ENCODE measurements at regions of chr13 and their contacts with region 1.

Region 1: DNA sequence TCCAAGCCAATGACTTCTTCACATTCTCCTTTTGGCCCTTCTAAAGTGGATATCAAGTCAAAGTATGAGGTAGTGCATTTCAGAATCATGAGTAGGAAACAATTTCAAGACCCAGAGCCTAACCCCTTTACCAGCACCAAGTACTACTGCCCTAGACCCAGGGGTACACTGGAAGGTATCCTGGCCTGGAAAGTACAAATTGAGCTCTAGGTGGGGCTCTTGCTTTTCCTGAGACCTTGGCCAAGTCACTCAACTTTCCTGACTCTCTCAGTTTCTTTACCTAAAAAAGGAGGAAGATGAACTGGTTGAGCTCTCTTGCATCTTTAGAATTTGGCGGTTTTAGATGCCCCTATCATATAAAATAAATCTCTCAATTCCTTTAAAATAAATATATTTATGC is 204.7 kb downstream of the FGF14 start:
- DNase-seq: peak; percentile 78
- H3K4me3 ChIP-seq: no peak overlapping the region
- H3K27ac ChIP-seq: no peak overlapping the region
- H3K4me1 ChIP-seq: peaks cover 29% of the 10 kb centered on the region
- H3K27me3 ChIP-seq: no peaks in the 10 kb centered on the region
- CTCF ChIP-seq: peak; percentile 64

Region 2: DNA sequence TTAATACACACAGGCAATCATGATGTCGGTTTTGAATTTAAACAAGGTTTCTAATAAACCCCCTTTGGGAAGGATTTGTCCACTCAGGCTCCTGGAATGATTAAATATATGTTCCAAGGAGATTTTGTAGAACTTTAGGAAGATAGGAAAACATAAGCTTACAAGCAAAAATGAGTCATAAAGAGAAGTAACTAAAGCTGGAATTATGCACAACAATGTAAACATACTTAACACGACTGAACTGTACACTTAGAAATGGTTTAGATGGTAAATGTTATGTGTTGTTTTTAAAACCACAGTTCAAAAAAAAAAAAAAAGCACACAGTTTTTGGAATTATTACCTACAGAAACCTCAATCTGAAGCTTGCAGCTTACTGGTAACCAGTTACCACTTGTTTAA is 1085.3 kb before region 1 on chr13:
- CTCF ChIA-PET with region 1: no interaction called
- POLR2A ChIA-PET with region 1: no interaction called
- intact Hi-C with region 1: no loop called
- DNase-seq: no peak
- H3K4me3 ChIP-seq: no peak overlapping the region
- H3K27ac ChIP-seq: no peak overlapping the region
- H3K4me1 ChIP-seq: peaks cover 19% of the 10 kb centered on the region
- H3K27me3 ChIP-seq: no peaks in the 10 kb centered on the region
- CTCF ChIP-seq: no peak

Region 3: DNA sequence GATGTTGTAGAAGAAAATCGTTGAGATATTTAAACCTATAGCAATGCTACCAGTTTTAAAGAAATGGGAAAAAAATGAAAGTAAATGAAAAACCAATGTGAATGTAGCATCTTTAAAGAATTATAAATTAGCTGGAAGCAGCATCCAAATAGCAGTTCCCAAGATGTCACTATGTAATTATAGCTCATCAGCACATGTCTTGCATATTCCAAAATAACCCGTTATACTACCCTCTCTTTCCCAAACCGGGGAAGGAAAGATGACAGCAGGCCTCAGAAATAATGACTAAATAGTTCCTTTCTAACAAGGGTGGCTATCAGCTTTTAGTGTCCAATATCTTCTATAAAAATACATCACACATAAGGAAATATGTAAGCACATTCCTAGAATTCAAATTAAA is 64.1 kb after region 1 on chr13:
- CTCF ChIA-PET with region 1: no interaction called
- POLR2A ChIA-PET with region 1: interaction called, 22 read pairs
- intact Hi-C with region 1: no loop called
- DNase-seq: no peak
- H3K4me3 ChIP-seq: no peak overlapping the region
- H3K27ac ChIP-seq: no peak overlapping the region
- H3K4me1 ChIP-seq: peaks cover 10% of the 10 kb centered on the region
- H3K27me3 ChIP-seq: no peaks in the 10 kb centered on the region
- CTCF ChIP-seq: no peak

Region 4: GRCh38 chr13:102394158-102395053 is 197.2 kb after region 1 on chr13:
- CTCF ChIA-PET with region 1: no interaction called
- POLR2A ChIA-PET with region 1: no interaction called
- intact Hi-C with region 1: loop called (anchors 2 kb)
- DNase-seq: peak; percentile 97
- H3K4me3 ChIP-seq: peak overlapping the region; percentile 73
- H3K27ac ChIP-seq: peak overlapping the region; percentile 98
- H3K4me1 ChIP-seq: peaks cover 65% of the 10 kb centered on the region
- H3K27me3 ChIP-seq: no peaks in the 10 kb centered on the region
- CTCF ChIP-seq: peak; percentile 53